ENCODE measurements at regions of chr3 and their contacts with region 1.

Region 1: DNA sequence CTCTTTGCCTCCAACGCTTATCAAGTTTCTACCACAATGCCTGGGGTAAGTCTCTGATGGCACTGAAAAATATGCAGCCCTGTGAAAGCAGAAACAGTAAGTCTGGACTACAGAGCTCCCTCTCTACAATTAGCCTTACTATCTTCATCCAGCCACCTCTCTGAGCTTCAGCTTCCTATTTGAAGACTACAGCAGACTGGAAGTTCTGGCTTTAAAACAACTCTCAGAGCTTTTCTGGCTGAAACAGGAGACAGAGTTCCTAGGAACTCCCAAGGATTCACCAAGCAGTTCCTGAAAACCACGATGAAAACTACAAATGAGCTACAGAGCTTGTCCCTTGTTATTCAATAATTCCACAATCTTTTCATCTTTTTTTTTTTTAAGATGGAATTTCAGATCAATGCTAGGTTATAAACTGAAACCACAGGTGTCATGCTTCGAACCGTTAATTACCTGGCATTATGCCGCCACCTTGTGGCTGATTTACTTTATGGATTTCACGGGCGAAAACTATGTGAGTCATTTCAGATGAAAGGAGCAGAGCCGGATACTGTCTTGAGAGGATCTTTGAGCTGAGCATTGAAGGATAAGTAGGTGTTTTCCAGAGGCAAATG is 3.9 kb downstream of the CRYGS start:
- DNase-seq: peak; percentile 79 to 86
- H3K4me3 ChIP-seq: no peak overlapping the region; the same call in 1 of the 2 replicates
- H3K27ac ChIP-seq: no peak overlapping the region
- H3K4me1 ChIP-seq: 0 out of 2 replicates have a peak, but pooled peaks cover 3% of the 10 kb centered on the region
- H3K27me3 ChIP-seq: no peaks in the 10 kb centered on the region
- CTCF ChIP-seq: peak; percentile 97

Region 2: GRCh38 chr3:186021673-186022362 is 518.5 kb before region 1 on chr3:
- CTCF ChIA-PET with region 1: interaction called, 3 read pairs
- POLR2A ChIA-PET with region 1: interaction called, 18 read pairs
- intact Hi-C with region 1: no loop called
- DNase-seq: peak; percentile 11 to 62
- H3K4me3 ChIP-seq: no peak overlapping the region
- H3K27ac ChIP-seq: no peak overlapping the region
- H3K4me1 ChIP-seq: no peaks in the 10 kb centered on the region
- H3K27me3 ChIP-seq: no peaks in the 10 kb centered on the region; the same call in 1 of the 2 replicates
- CTCF ChIP-seq: no peak

Region 3: DNA sequence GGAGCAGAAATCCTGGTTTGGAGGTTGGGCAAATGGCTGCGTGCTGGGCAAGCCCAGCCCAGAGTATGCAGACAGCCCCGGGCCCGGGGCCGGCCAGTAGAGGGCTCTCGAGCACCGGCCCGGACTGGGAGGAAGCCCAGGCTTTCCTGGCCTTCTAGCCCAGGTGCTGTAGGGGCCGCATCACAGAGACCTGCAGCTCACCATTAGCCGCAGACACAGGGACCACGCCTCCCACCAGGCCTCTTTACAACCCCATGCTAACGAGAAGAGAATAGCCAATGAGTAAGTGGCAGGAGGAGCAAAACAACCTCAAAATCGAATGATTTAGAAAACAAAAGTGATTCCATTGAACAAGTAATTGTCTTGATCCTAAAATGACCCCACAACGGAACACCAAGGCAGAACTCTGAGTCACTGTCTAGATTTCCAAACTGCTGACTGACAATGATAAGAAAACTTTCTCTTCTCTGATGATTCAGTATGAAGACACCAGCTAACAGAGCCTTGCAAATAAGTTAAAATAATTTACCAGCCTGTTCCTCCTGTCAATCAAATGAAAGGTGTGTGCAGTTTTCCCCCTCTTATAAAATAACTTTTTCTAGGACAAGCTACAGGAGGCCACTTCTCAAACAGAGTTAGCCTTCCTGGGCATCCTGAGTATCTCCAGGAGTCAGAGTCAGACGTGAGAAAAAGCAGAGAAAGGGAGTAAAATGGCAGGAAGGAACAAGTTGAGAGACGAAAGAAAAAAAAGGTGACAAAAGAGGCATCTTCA is 280.5 kb before region 1 on chr3:
- CTCF ChIA-PET with region 1: interaction called, 16 read pairs
- POLR2A ChIA-PET with region 1: no interaction called
- intact Hi-C with region 1: loop called (anchors 1 kb)
- DNase-seq: peak; percentile 73 to 81
- H3K4me3 ChIP-seq: peak overlapping the region; percentile 23; the same call in 1 of the 2 replicates
- H3K27ac ChIP-seq: no peak overlapping the region
- H3K4me1 ChIP-seq: peaks cover 6% of the 10 kb centered on the region
- H3K27me3 ChIP-seq: peaks cover 4% of the 10 kb centered on the region; the same call in 1 of the 2 replicates
- CTCF ChIP-seq: peak; percentile 93

Region 4: GRCh38 chr3:186277268-186277909 is 262.9 kb before region 1 on chr3:
- CTCF ChIA-PET with region 1: interaction called, 3 read pairs
- POLR2A ChIA-PET with region 1: no interaction called
- intact Hi-C with region 1: loop called (anchors 1 kb)
- DNase-seq: peak; percentile 50 to 53
- H3K4me3 ChIP-seq: no peak overlapping the region
- H3K27ac ChIP-seq: no peak overlapping the region
- H3K4me1 ChIP-seq: no peaks in the 10 kb centered on the region
- H3K27me3 ChIP-seq: peaks cover 62% of the 10 kb centered on the region
- CTCF ChIP-seq: peak; percentile 70

Region 5: DNA sequence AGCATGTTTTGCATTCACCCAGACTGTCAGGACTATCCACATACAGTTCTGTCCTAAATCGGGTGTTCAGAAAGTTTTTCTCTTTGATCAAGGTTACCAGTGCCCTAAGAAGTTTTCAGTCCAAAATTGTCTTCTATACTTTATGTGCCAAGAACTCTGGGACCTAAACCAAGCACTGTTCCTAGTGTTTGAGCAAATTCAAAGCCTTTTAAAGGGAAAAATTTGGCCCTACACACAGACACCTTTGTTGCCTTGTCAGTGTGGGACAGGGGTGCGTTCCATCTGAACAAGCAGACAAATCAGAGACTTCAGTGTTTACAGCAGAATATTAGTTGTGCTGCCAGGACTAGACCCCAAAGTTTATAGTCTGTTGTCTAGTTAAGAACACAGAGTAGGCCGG is 228.9 kb before region 1 on chr3:
- CTCF ChIA-PET with region 1: no interaction called
- POLR2A ChIA-PET with region 1: no interaction called
- intact Hi-C with region 1: no loop called
- DNase-seq: no peak
- H3K4me3 ChIP-seq: no peak overlapping the region
- H3K27ac ChIP-seq: no peak overlapping the region
- H3K4me1 ChIP-seq: no peaks in the 10 kb centered on the region
- H3K27me3 ChIP-seq: peaks cover 70% of the 10 kb centered on the region
- CTCF ChIP-seq: no peak

Region 6: DNA sequence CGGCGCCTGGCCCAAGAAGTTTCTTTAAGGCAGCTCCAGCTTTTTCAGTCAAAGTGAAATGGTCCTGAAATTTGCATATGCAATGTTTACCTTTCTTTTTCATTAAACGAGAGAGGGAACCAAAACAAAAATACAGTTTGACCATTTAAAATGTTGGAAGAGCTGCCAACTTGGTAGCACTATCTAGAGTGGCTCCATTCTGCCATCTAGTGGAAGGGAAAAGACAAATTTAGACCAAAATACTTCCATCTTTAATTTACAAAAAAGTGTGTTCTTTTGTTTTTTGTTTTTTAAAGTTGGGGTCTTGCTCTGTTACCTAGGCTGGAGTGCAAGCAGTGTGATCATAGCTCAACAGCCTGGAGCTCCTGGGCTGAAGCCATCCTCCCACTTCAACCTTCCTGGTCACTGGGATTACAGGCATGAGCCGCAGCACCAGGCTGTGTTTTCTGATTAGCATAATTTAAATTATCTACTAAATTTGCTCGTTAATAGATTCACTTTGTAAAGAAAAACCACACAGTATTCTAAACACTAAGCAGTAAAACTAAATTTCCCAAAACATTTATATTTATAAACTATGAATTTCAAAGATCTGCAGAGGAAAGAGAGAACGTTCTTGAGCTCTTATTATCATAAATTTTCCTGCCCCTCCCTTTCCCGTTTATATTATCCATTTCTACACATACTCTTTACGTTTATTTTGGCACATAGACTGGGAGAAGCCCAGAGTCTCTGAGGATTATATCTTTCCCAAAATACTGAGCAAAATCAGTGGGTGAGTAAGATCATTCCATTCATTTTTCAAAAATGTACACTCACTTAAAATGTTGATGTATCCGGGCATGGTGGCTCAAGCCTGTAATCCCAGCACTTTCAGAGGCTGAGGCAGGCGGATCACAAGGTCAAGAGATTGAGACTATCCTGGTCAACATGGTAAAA is 281.4 kb after region 1 on chr3:
- CTCF ChIA-PET with region 1: interaction called, 4 read pairs
- POLR2A ChIA-PET with region 1: no interaction called
- intact Hi-C with region 1: loop called (anchors 1 kb)
- DNase-seq: no peak
- H3K4me3 ChIP-seq: no peak overlapping the region
- H3K27ac ChIP-seq: no peak overlapping the region
- H3K4me1 ChIP-seq: peaks cover 9% of the 10 kb centered on the region
- H3K27me3 ChIP-seq: no peaks in the 10 kb centered on the region
- CTCF ChIP-seq: peak; percentile 92

Region 7: DNA sequence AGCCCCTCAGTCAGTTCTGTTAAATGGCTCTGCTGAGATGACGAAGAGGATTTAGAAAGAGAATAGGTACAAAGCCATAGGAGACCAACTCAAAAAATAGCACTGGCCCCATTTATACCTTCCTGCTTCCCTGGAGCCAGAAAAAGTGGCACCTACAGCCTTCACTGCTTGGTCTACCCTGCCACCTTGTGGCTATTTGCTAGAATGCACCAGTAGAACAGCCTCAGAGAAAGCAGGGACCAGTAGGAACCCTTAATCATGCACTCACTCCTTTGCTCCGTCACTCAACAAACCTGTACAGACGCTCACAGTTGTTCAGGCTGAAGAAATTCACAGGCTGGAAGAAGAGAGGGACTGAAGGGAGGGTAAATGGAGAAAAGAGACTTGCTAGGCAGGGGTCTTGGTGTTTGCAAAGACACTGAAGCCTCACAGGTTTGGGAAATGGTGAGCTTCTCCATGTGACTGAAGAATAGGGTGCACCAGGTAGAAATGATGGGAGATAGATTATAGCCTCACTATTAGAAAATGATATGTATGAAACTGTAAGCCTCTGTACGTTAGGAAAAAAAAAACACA is 1174.2 kb after region 1 on chr3:
- CTCF ChIA-PET with region 1: no interaction called
- POLR2A ChIA-PET with region 1: no interaction called
- intact Hi-C with region 1: loop called (anchors 10 kb)
- DNase-seq: peak; percentile 74 to 82
- H3K4me3 ChIP-seq: no peak overlapping the region
- H3K27ac ChIP-seq: no peak overlapping the region
- H3K4me1 ChIP-seq: no peaks in the 10 kb centered on the region
- H3K27me3 ChIP-seq: no peaks in the 10 kb centered on the region
- CTCF ChIP-seq: peak; percentile 99

Measured in PC-9 (cell line).